Pancreas (tissue), 10 donors: ENCODE measurements at regions of chr1 and their contacts with region 1.

Region 1: DNA sequence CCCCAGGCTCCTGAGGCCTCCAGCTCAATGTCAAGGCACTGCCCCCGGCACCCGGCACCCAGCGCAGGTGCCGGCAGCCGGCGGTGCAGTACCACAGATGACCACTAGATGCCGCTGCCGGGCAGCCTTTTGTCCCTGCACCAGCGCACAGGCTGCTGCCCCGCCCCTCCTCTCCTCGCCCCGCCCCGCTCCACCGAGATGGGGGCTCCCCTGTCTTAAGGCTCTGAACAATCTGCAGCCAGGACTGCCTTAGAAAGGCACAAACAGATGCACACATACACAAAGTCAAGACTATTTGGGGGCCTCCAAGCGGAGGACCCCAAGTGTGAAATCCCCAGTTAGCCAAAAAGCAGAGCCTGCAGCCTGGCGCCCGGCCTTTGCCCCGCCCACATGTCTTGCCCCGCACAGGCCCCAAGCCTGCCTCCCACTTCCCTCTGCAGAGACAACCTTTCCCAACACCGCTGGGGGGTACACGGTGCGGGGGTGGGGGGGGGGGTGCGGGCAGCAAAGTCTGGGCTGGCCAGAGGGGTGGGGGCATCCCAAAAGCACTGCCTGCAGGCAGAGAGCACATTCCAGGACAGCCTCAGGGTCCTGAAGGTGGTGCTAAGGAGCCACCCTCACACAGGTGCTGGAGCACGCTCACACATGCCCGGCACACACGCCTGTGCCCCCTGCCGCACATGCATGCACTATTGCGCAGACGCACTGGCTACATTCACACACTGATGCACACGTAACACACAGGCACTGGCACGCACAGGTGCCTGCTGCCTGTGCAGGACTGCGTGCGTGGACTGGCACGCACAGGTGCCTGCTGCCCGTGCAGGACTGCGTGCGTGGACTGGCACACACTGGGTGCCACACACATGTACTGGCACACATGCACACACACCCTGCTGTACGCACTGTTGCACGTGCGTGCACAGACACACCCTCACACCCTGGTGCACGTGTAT is 37.1 kb downstream of the ARHGEF16 start:
- DNase-seq: peak in 5 of 6 donors; percentile 57 to 93 (median 79)
- ATAC-seq: peak; percentile 77 to 97 (median 92)
- H3K4me3 ChIP-seq: no peak overlapping the region
- H3K27ac ChIP-seq: no peak overlapping the region
- H3K4me1 ChIP-seq: no peaks in the 10 kb centered on the region
- H3K27me3 ChIP-seq: no peaks in the 10 kb centered on the region
- CTCF ChIP-seq: peak; percentile 100

Region 2: DNA sequence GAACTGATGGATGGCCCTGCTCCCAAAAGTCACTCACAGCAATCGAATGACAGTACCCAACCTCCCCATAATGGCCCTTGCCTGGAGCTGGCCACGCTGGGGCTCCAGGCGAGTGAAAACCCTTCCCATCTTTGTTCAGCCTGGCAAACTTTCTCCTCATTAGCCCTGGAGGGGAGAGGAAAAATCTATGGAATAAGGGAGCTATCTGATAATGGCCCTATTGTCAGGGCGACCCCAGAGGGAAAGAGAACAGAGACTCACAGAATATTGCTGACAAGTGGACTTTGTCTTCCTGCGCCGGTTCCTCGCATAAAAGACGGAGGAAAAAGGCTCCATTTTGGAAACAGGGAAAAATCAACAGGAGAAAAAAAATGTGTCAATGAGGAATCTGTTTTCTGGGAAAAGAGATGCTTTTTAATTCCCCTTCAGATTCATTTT is 50.1 kb before region 1 on chr1:
- intact Hi-C with region 1: no loop called
- DNase-seq: peak in 1 of 6 donors; percentile 13
- ATAC-seq: no peak
- H3K4me3 ChIP-seq: no peak overlapping the region
- H3K27ac ChIP-seq: no peak overlapping the region
- H3K4me1 ChIP-seq: no peaks in the 10 kb centered on the region
- H3K27me3 ChIP-seq: no peaks in the 10 kb centered on the region
- CTCF ChIP-seq: no peak

Region 3: DNA sequence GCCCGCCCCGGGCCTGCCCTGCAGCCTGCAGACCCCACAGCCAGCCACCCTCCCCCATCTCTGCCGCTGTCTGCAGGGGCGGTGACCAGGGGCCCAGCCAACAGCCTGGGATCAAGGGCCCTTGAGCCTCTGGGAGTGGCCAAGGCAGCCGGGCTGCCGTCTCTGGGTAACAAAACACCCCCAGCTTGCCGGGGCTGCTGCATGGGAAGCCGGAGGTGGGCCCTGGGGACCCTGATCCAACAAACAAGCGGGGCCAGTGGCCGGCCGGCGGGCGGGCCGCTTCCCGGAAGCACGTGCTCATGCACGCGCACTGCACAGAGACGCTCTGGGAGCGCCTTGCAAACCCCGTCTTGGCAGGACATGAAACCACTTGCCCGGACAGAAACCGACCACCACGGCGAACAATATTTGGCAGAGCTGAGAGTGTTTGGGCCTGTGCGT is 106.5 kb after region 1 on chr1:
- intact Hi-C with region 1: no loop called
- DNase-seq: no peak
- ATAC-seq: peak in 1 of 4 donors; percentile 30
- H3K4me3 ChIP-seq: no peak overlapping the region
- H3K27ac ChIP-seq: no peak overlapping the region
- H3K4me1 ChIP-seq: no peaks in the 10 kb centered on the region
- H3K27me3 ChIP-seq: no peaks in the 10 kb centered on the region
- CTCF ChIP-seq: no peak

Region 4: GRCh38 chr1:3614755-3615742 is 123.5 kb after region 1 on chr1:
- intact Hi-C with region 1: loop called in 2 of 3 experiments (anchors 2 to 5 kb)
- DNase-seq: peak in 1 of 6 donors; percentile 33
- ATAC-seq: no peak
- H3K4me3 ChIP-seq: no peak overlapping the region
- H3K27ac ChIP-seq: no peak overlapping the region
- H3K4me1 ChIP-seq: peaks cover 6 to 10% (median 6%) of the 10 kb centered on the region in 3 donors
- H3K27me3 ChIP-seq: no peaks in the 10 kb centered on the region
- CTCF ChIP-seq: peak in 2 of 4 donors; percentile 17 to 28

Region 5: GRCh38 chr1:3624200-3625136 is 132.9 kb after region 1 on chr1 and contains the start of gene TPRG1L:
- intact Hi-C with region 1: loop called in 2 of 3 experiments (anchors 2 to 5 kb)
- DNase-seq: peak; percentile 98 to 100 (median 99)
- ATAC-seq: peak; percentile 96 to 99 (median 97)
- H3K4me3 ChIP-seq: peak within 1 kb of the TSS; percentile 66 to 99 (median 86)
- H3K27ac ChIP-seq: peak within 1 kb of the TSS in 3 of 4 donors; percentile 48 to 55 (median 52)
- H3K4me1 ChIP-seq: peaks cover 0 to 15% (median 13%) of the 10 kb centered on the region in 3 donors
- H3K27me3 ChIP-seq: no peaks in the 10 kb centered on the region
- CTCF ChIP-seq: no peak
- total RNA-seq, gene TPRG1L: 16.4 to 25.8 (median 21.8) TPM

Region 6: DNA sequence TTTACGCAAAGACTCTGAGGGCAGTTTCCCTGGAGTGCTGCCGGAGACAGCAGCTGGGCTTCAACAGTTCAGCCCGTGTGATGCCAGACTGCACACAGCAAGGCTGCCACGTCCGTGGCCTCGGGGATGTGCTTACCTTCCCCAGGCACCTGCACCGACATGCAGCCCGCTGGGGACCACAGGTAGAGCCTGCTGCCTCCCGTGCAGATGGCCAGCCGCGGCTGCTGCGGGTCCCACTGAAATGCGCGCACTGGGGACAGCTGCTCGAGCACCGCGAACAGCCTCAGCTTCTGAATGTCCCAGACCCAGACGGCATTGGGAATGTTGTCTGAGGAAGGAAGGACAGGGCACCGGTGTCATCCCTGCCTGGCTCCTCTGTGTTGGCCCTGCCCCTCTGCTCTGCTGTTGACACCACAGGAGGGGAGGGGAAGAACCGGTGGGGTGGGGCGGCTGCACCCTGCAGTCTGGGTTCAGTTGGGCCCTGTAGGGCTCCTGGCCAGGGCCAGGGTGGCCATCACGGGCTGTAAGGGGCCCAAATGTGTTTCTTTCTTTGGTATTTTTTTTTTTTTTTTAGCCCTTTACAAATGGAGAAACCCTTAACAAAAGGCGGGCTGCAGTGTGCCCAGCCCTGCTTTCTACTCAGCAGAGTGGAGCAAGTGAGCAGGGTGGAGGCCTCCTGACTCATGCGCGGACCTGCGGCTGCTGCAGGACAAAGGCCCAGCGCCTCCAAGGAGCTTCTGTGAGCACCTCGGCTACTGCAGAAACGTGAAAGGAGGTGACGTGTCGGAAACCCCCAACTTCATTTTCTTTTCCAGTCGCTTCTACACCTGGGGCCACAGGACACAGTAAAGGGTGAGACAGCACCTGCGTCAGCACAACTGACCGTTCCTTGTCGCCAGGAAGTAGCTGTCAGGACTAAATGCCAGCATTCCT is 140.0 kb after region 1 on chr1:
- intact Hi-C with region 1: loop called in 1 of 3 experiments (anchors 10 kb)
- DNase-seq: no peak
- ATAC-seq: no peak
- H3K4me3 ChIP-seq: no peak overlapping the region
- H3K27ac ChIP-seq: no peak overlapping the region
- H3K4me1 ChIP-seq: no peaks in the 10 kb centered on the region
- H3K27me3 ChIP-seq: no peaks in the 10 kb centered on the region
- CTCF ChIP-seq: no peak

Region 7: DNA sequence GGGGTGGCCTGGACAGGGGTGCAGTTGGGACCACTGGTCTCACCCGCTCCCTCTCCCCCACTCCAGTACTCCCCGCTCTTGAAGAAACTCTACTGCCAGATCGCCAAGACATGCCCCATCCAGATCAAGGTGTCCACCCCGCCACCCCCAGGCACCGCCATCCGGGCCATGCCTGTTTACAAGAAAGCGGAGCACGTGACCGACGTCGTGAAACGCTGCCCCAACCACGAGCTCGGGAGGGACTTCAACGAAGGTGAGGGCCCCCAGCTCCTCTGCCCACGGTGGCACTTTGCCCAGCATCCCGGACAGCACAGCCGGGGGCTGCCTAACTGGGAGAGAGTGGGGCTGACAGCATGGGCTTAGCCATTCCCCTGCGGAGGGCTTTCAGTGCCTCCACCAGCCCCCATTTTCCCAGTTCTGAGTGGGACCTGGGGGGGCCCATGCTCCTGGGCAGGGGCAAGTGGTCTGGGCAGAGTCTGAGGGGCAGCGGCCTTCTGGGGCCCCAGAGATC is 230.4 kb after region 1 on chr1:
- intact Hi-C with region 1: loop called in 1 of 3 experiments (anchors 5 kb)
- DNase-seq: no peak
- ATAC-seq: no peak
- H3K4me3 ChIP-seq: no peak overlapping the region
- H3K27ac ChIP-seq: no peak overlapping the region
- H3K4me1 ChIP-seq: no peaks in the 10 kb centered on the region
- H3K27me3 ChIP-seq: no peaks in the 10 kb centered on the region
- CTCF ChIP-seq: no peak